BJ (cell line): ENCODE measurements at regions of chr7 and their contacts with region 1.

Region 1: GRCh38 chr7:92436612-92437445 is 10.5 kb upstream of the GATAD1 start:
- DNase-seq: no peak
- H3K4me3 ChIP-seq: no peak overlapping the region
- H3K27me3 ChIP-seq: 0 out of 2 replicates have a peak, but pooled peaks cover 1% of the 10 kb centered on the region
- CTCF ChIP-seq: no peak

Region 2: GRCh38 chr7:92131093-92131492 is 305.7 kb before region 1 on chr7:
- CTCF ChIA-PET with region 1: no interaction called
- POLR2A ChIA-PET with region 1: no interaction called
- DNase-seq: no peak
- H3K4me3 ChIP-seq: no peak overlapping the region
- H3K27me3 ChIP-seq: no peaks in the 10 kb centered on the region
- CTCF ChIP-seq: no peak

Region 3: GRCh38 chr7:92141161-92141560 is 295.7 kb before region 1 on chr7:
- CTCF ChIA-PET with region 1: no interaction called
- POLR2A ChIA-PET with region 1: no interaction called
- DNase-seq: no peak
- H3K4me3 ChIP-seq: no peak overlapping the region
- H3K27me3 ChIP-seq: no peaks in the 10 kb centered on the region; the same call in 1 of the 2 replicates
- CTCF ChIP-seq: no peak

Region 4: DNA sequence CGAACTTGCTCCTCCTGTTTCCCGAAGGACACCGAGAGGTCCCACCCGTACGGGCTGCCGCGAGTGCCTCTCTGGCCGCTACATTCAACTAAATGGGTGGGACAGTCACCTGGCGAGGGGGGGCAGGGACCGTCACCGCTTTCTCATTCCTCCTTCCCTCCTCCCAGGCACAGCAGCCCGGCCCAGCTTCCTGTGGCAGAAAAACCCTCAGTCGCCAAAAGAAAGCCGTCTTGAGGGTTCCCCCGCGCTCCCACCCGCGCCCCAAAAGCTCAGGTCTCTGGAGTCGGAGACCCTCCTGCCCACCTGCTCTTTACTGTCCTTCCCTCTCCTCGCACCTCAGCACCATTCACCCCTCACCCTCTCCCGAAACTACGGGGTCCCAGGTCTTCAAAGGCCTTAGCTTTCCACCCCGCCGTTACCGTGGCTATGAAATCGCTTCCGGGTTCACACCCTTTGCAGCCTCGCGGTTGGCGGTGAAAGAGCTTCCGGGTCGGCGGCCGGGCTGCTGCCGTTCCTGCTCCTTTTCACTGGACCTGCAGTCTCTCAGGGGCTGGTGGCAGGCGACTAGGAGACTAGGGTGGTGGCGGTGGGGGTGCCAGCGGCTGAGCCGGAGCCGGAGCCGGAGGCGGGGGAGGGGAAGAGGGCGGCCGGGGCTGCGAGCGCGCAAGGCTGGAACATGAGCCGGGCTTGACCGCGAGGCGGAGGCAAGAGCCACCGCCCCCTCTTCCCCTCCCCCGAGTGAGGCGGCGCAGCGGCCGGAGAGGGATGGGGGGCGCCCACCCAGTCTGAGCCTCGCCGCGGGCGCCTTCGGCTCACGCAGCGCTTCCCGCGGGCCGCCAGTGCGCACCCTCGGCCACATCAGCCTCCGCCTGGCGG is 191.1 kb before region 1 on chr7 and contains the starts of genes ANKIB1 and KRIT1:
- CTCF ChIA-PET with region 1: no interaction called
- POLR2A ChIA-PET with region 1: no interaction called
- DNase-seq: peak; percentile 32
- H3K4me3 ChIP-seq: peak within 1 kb of the TSS; percentile 74
- H3K27me3 ChIP-seq: no peaks in the 10 kb centered on the region
- CTCF ChIP-seq: no peak
- polyA plus RNA-seq, gene ANKIB1: 35.0 and 45.1 TPM in 2 replicates
- polyA plus RNA-seq, gene KRIT1: 23.7 and 35.8 TPM in 2 replicates

Region 5: GRCh38 chr7:92336662-92337340 is 100.0 kb before region 1 on chr7:
- CTCF ChIA-PET with region 1: no interaction called
- POLR2A ChIA-PET with region 1: no interaction called
- DNase-seq: no peak
- H3K4me3 ChIP-seq: no peak overlapping the region
- H3K27me3 ChIP-seq: no peaks in the 10 kb centered on the region
- CTCF ChIP-seq: no peak

Region 6: DNA sequence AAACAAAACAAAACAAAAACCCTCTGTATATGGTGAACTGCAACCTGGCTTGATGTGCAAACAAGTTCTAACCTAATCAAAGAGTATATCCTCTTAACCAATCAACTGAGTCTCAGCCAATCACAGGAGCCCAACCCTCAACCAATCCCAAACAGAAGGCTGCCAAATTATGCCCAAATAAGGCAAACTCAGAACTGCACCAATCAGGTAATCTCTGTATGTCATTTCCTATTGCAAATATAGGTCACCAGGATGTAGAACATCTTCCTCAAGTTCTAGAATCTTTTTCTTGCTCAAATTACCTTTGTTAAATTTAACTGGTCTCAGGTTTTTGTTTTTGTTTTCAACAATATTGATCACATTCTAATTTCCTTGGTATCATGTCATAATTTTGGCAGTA is 148.2 kb after region 1 on chr7:
- CTCF ChIA-PET with region 1: no interaction called
- POLR2A ChIA-PET with region 1: interaction called, 12 read pairs
- DNase-seq: no peak
- H3K4me3 ChIP-seq: no peak overlapping the region
- H3K27me3 ChIP-seq: no peaks in the 10 kb centered on the region
- CTCF ChIP-seq: no peak